ENCODE measurements at regions of chr10 and their contacts with region 1.

Region 1: GRCh38 chr10:117350909-117351308 is 24.3 kb downstream of the PDZD8 start:
- DNase-seq: no peak
- H3K4me3 ChIP-seq: no peak overlapping the region
- H3K27ac ChIP-seq: no peak overlapping the region
- H3K4me1 ChIP-seq: peaks cover 5 to 24% (median 15%) of the 10 kb centered on the region in 4 experiments
- H3K27me3 ChIP-seq: no peaks in the 10 kb centered on the region
- CTCF ChIP-seq: no peak
- EP300 ChIP-seq: no peak
- POLR2A ChIP-seq: no peak
- RAD21 ChIP-seq: no peak

Region 2: DNA sequence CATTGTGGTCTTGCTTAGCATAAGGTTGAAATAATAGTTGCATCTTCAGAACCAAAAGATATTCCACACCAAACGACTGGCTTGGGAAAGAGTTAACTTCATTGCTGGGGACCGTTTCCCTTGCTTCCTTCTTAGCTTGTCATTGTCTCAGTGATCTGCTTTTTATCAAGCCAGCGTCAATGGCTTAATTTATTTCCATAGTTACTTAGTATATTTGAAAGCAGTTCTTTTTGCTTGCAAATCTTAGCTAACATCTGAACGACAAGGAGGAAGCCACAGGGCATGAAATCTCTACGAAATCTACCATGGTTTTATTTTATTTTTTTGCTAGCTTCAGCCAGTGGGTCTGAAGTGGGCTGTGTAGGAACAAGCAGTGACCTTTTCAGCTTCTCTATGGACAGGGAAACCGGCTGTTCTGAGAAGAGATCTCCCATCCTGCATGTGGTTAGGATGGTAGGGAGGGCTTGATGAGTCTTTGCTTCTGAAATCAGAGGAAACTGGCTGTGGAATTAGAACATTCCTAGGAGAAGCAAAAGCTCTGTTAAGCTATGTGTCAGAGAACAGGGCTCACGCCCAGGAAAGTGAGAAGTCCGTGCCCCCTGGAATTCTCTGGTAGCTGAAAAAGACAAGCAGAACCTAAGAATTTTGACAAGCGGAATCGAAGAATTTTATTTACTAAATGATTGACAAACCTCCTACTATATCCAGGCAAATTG is 102.0 kb before region 1 on chr10:
- CTCF ChIA-PET with region 1: no interaction called
- POLR2A ChIA-PET with region 1: no interaction called
- DNase-seq: no peak
- H3K4me3 ChIP-seq: no peak overlapping the region
- H3K27ac ChIP-seq: no peak overlapping the region
- H3K4me1 ChIP-seq: peaks cover 0 to 6% (median 1%) of the 10 kb centered on the region in 4 experiments; a peak in 3 of 7 replicates
- H3K27me3 ChIP-seq: no peaks in the 10 kb centered on the region
- CTCF ChIP-seq: no peak
- EP300 ChIP-seq: no peak
- POLR2A ChIP-seq: no peak
- RAD21 ChIP-seq: no peak

Region 3: GRCh38 chr10:117360994-117361667 is 10.2 kb after region 1 on chr10:
- CTCF ChIA-PET with region 1: interaction called, 11 read pairs
- POLR2A ChIA-PET with region 1: interaction called, 3 read pairs
- DNase-seq: no peak
- H3K4me3 ChIP-seq: no peak overlapping the region
- H3K27ac ChIP-seq: no peak overlapping the region
- H3K4me1 ChIP-seq: peaks cover 0 to 7% (median 3%) of the 10 kb centered on the region in 4 experiments; a peak in 3 of 7 replicates
- H3K27me3 ChIP-seq: no peaks in the 10 kb centered on the region
- CTCF ChIP-seq: no peak
- EP300 ChIP-seq: no peak
- POLR2A ChIP-seq: no peak
- RAD21 ChIP-seq: no peak

Region 4: GRCh38 chr10:117472872-117473271 is 122.0 kb after region 1 on chr10:
- CTCF ChIA-PET with region 1: no interaction called
- POLR2A ChIA-PET with region 1: no interaction called
- DNase-seq: no peak
- H3K4me3 ChIP-seq: no peak overlapping the region
- H3K27ac ChIP-seq: no peak overlapping the region
- H3K4me1 ChIP-seq: no peaks in the 10 kb centered on the region
- H3K27me3 ChIP-seq: no peaks in the 10 kb centered on the region; a peak in 1 of 7 replicates
- CTCF ChIP-seq: no peak
- EP300 ChIP-seq: no peak
- POLR2A ChIP-seq: no peak
- RAD21 ChIP-seq: no peak

Region 5: DNA sequence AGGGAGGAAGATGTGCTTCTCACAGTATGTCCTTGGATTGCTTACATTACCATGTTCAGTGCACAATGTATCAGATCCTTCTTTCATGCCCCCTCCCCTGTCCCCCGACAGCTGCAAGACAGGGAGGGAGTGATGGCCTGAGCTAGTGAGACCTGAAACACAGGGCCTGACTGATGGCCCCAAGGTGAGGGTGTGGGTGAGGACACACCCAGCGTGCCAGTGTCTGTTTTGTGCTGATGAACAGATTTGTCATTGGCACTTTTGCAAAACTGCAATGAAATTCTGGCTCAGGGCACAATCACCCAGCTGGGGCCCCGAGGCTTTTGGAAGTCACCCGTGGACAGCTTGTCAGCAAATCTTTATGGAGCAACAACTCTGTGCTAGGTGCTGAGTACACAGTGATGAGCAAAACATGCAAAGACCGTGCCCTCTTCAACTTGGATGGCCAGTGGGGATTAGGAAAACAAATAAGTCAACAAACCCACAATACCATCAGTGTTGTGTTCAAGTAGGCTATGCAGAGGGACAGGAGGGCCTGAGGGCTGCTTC is 132.2 kb after region 1 on chr10:
- CTCF ChIA-PET with region 1: no interaction called
- POLR2A ChIA-PET with region 1: no interaction called
- DNase-seq: no peak
- H3K4me3 ChIP-seq: no peak overlapping the region
- H3K27ac ChIP-seq: no peak overlapping the region
- H3K4me1 ChIP-seq: 0 out of 7 replicates have a peak, but pooled peaks cover 0 to 1% (median 0%) of the 10 kb centered on the region in 4 experiments
- H3K27me3 ChIP-seq: peaks cover 0 to 2% (median 0%) of the 10 kb centered on the region in 4 experiments; a peak in 4 of 7 replicates
- CTCF ChIP-seq: no peak
- EP300 ChIP-seq: no peak
- POLR2A ChIP-seq: no peak
- RAD21 ChIP-seq: no peak